ENCODE measurements at regions of chr1 and their contacts with region 1.

Region 1: GRCh38 chr1:228734881-228735801 is at the start of gene RHOU:
- DNase-seq: peak; percentile 79 to 91 (median 81)
- ATAC-seq: peak; percentile 84 to 95 (median 90)
- H3K4me3 ChIP-seq: peak within 1 kb of the TSS; percentile 62 to 94 (median 81)
- H3K27ac ChIP-seq: peak within 1 kb of the TSS; percentile 68 to 96 (median 86)
- H3K4me1 ChIP-seq: peaks cover 0 to 47% (median 9%) of the 10 kb centered on the region in 12 donors
- H3K27me3 ChIP-seq: peaks cover 0 to 7% (median 0%) of the 10 kb centered on the region in 9 donors
- CTCF ChIP-seq: peak; percentile 21 to 96 (median 90)
- POLR2A ChIP-seq: peak in 1 of 2 donors; percentile 53
- total RNA-seq, gene RHOU: 2.1 to 20.5 (median 2.9) TPM

Region 2: GRCh38 chr1:227612658-227613057 is 1122.5 kb before region 1 on chr1:
- intact Hi-C with region 1: no loop called
- DNase-seq: no peak
- ATAC-seq: no peak
- H3K4me3 ChIP-seq: no peak overlapping the region
- H3K27ac ChIP-seq: no peak overlapping the region
- H3K4me1 ChIP-seq: no peaks in the 10 kb centered on the region
- H3K27me3 ChIP-seq: no peaks in the 10 kb centered on the region
- CTCF ChIP-seq: no peak
- POLR2A ChIP-seq: no peak

Region 3: DNA sequence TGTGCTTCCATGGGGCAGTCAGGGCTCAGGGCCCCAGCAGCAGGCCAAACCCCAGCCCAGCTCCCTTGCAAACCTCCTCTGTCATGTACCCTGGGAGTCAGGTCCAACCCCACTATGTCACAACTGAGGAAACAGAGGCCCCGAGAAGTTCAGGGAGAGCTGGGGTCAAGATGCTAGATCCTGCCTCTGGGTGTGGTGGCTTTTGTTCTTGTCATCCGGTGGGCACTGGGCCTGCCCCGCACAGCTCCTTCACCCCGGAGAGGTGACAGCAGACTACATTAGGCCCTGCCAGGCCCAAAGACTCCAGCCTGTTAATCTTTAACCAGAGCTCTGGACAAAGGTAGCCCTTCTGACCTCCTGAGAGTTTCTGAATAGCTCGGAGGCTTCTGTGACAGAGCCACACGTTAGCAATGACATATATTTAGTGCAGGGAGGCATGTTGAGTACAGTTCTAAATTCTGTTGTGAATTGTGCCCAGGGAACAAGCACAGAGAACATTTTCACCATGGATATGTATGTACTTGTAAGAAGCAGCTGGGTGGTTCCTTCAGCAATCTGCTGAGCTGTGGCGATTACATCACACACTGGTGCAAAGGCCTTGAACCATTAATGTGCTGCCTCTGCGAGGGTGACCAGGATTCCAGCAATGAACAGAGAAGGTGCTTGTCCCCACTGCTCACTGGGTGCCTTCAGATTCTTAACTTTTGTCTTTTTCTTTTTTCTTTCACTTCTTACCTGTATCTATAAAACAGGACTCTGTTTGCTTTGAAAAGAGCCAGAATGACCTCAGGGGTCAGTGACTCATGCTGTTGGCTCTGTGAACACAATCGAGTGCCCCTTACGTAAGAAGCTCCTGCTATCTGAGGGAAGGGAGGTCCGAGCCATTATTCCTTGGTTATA is 102.9 kb after region 1 on chr1:
- intact Hi-C with region 1: loop called in 1 of 10 experiments (anchors 10 kb)
- DNase-seq: peak in 2 of 5 donors; percentile 32 to 50
- ATAC-seq: peak; percentile 36 to 82 (median 78)
- H3K4me3 ChIP-seq: no peak overlapping the region
- H3K27ac ChIP-seq: peak overlapping the region in 8 of 12 donors; percentile 10 to 67 (median 45)
- H3K4me1 ChIP-seq: peaks cover 0 to 26% (median 11%) of the 10 kb centered on the region in 12 donors
- H3K27me3 ChIP-seq: peaks cover 0 to 23% (median 0%) of the 10 kb centered on the region in 9 donors
- CTCF ChIP-seq: no peak
- POLR2A ChIP-seq: no peak

Region 4: DNA sequence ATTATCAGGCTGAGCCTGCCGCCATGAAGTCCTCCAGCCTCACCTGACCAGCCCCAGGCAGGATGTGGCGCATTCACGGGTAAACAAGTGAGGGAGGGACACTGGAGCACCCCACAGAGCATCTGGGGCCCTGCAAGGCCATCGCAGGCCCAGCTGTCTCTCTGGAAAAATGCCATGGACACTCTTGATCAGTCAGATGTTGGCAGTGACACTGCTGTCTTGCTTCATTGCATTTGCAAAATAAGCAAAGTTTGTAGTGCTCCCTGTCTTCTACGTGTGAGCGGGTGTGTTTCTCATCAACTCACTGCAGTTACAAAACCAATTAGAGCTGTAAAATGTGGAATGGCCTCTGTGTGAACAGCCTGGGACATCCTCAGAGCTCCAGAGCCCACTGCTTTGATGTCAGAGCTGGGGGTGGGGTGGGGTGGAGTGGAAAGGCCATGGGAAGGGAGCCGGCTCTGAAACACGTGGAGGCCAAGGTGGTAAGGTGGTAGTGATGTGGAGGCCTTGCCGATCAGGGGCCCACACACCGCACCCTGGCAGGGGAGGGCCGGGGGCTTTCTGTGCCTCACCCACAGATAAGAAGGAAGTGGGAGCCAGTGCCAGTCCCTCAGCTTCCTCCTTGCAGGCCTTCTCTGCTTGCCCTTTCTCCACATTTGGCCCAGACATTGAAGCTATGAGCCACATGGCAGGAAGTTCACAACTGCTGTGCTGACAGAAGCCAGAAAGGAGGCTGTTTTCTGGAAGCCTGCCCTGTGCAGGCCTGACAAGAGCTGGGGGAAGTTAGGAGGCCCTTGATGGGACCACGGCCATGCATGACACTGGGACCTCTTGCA is 255.1 kb after region 1 on chr1:
- intact Hi-C with region 1: loop called in 2 of 10 experiments (anchors 5 to 10 kb)
- DNase-seq: peak; percentile 73 to 82 (median 80)
- ATAC-seq: peak; percentile 77 to 90 (median 83)
- H3K4me3 ChIP-seq: no peak overlapping the region
- H3K27ac ChIP-seq: peak overlapping the region in 11 of 12 donors; percentile 23 to 90 (median 55)
- H3K4me1 ChIP-seq: peaks cover 0 to 49% (median 23%) of the 10 kb centered on the region in 12 donors
- H3K27me3 ChIP-seq: no peaks in the 10 kb centered on the region
- CTCF ChIP-seq: no peak
- POLR2A ChIP-seq: no peak

Region 5: DNA sequence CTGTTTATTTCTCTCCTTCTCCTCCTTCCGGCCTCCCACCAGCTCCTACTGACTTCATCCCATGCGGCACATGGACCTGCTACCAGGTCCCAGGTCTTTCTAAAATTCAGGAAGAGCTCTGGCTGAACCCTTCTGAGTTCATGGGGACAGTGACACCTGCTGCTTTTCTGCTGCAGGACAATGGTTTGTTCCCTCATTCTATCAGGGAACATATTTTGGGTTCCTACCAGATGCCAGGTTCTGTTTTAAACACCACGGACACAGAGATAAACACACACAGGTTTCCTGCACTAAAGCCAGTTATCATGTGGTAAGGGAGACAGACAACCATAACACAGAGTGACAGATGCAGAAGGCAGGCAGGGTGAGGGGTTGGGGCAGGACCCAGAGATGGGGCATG is 421.7 kb after region 1 on chr1:
- intact Hi-C with region 1: loop called (anchors 1 to 10 kb)
- DNase-seq: no peak
- ATAC-seq: peak in 3 of 4 donors; percentile 66 to 81 (median 66)
- H3K4me3 ChIP-seq: no peak overlapping the region
- H3K27ac ChIP-seq: peak overlapping the region in 2 of 12 donors; percentile 54 to 90
- H3K4me1 ChIP-seq: peaks cover 0 to 56% (median 2%) of the 10 kb centered on the region in 12 donors
- H3K27me3 ChIP-seq: peaks cover 0 to 1% (median 0%) of the 10 kb centered on the region in 9 donors
- CTCF ChIP-seq: peak; percentile 20 to 68 (median 56)
- POLR2A ChIP-seq: no peak